Esophagus squamous epithelium (tissue), 5 donors: ENCODE measurements at regions of chr9 and their contacts with region 1.

Region 1: GRCh38 chr9:129482521-129483414 is 138.1 kb downstream of the C9orf50 start:
- DNase-seq: no peak
- H3K4me3 ChIP-seq: peak overlapping the region; percentile 41 to 80 (median 64)
- H3K27ac ChIP-seq: peak overlapping the region; percentile 97 to 100 (median 98)
- H3K4me1 ChIP-seq: peaks cover 49 to 91% (median 66%) of the 10 kb centered on the region in 3 donors
- H3K27me3 ChIP-seq: no peaks in the 10 kb centered on the region
- CTCF ChIP-seq: peak in 1 of 6 experiments; percentile 12
- POLR2A ChIP-seq: peak in 3 of 4 donors; percentile 22 to 61 (median 45)

Region 2: GRCh38 chr9:129139993-129140396 is 342.8 kb before region 1 on chr9:
- intact Hi-C with region 1: loop called (anchors 10 kb)
- DNase-seq: peak; percentile 81
- H3K4me3 ChIP-seq: peak overlapping the region; percentile 32 to 63 (median 46)
- H3K27ac ChIP-seq: peak overlapping the region; percentile 97 to 99 (median 99)
- H3K4me1 ChIP-seq: peaks cover 57 to 79% (median 63%) of the 10 kb centered on the region in 3 donors
- H3K27me3 ChIP-seq: no peaks in the 10 kb centered on the region
- CTCF ChIP-seq: peak in 1 of 6 experiments; percentile 16
- POLR2A ChIP-seq: peak in 2 of 4 donors; percentile 14 to 65